ENCODE measurements at regions of chr19 and their contacts with region 1.

Region 1: DNA sequence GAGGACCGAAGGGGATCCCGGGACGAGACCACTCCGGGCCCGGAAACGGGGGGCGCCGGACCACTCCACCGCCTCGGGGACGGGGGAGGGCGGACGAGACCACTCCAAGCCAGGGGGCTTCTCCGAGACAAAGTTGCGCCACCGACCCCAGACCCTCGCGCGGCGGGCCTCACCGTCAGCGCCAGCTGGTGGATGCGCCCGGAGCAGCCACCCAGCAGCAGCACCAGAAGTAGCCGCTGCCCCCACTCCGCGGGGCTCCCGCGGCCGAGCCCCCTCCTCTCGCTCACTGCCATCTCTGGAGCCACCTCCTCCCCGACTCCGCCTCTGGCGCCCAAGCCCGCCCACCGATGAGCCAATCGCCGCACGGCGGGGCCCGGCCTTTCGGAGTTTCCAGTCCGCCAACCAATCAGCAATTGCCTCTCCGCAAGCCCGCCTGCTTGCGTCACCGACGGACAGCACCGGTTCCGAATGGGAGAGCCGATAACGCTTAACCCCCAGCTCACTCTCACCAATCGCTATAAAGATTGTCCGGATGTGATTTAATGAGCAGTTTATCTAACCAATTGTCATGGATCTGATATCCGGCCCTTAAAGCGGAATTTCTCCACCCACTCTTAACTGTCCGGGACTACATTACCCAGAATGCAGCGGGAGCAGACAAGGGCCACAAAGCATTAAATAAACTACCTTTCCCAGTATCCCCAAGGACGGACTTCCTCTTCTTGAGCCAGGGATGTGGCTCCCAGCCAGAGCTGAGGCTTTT is at the start of gene GPR108:
- DNase-seq: peak; percentile 100
- ATAC-seq: peak; percentile 81
- H3K4me3 Mint-ChIP-seq: peak within 1 kb of the TSS; percentile 89
- H3K27ac Mint-ChIP-seq: peak within 1 kb of the TSS; percentile 98
- H3K4me1 Mint-ChIP-seq: peaks cover 39% of the 10 kb centered on the region
- H3K27me3 Mint-ChIP-seq: no peaks in the 10 kb centered on the region
- total RNA-seq, gene GPR108: 58.8 to 59.9 TPM

Region 2: DNA sequence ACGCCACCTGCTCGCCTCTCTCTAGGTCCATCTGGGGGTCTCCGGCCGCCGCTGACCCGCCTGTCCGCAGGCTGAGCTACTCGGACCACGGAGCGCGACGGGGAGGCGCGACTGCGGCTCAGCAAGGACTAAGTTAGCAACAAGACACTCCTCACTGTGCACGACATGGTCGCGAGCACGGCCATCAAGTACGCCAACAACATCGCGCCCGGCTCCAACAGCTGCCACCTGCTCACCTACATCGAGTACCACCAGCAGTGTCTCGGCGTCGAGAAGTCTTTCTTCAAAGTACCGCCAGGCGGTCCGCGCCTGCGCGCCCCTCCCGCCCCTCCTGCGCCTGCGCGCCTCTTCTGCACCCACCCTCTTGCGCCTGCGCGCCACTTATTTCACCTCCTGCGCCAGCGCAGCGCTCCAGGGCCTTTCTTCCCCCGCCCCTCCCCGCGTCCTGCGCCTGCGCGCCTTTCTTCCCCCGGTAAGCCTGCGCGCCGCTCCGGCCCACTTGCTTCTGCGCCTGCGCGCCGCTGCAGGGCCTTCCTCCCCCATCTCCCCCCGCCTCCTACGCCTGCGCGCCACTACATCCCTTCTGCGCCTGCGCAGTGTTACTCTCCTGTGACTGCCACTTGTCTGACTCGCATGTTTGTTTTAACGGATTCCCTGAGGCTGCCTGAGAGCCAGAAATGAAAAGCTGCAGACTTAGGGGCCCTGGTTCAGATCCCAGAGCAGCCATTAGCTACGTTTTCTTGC is 538.1 kb before region 1 on chr19:
- CTCF ChIA-PET with region 1: no interaction called
- POLR2A ChIA-PET with region 1: no interaction called
- intact Hi-C with region 1: loop called in 1 of 2 experiments (anchors 1 kb)
- DNase-seq: peak; percentile 100
- ATAC-seq: peak; percentile 95
- H3K4me3 Mint-ChIP-seq: peak overlapping the region; percentile 100
- H3K27ac Mint-ChIP-seq: peak overlapping the region; percentile 92
- H3K4me1 Mint-ChIP-seq: peaks cover 12% of the 10 kb centered on the region
- H3K27me3 Mint-ChIP-seq: no peaks in the 10 kb centered on the region

Region 3: DNA sequence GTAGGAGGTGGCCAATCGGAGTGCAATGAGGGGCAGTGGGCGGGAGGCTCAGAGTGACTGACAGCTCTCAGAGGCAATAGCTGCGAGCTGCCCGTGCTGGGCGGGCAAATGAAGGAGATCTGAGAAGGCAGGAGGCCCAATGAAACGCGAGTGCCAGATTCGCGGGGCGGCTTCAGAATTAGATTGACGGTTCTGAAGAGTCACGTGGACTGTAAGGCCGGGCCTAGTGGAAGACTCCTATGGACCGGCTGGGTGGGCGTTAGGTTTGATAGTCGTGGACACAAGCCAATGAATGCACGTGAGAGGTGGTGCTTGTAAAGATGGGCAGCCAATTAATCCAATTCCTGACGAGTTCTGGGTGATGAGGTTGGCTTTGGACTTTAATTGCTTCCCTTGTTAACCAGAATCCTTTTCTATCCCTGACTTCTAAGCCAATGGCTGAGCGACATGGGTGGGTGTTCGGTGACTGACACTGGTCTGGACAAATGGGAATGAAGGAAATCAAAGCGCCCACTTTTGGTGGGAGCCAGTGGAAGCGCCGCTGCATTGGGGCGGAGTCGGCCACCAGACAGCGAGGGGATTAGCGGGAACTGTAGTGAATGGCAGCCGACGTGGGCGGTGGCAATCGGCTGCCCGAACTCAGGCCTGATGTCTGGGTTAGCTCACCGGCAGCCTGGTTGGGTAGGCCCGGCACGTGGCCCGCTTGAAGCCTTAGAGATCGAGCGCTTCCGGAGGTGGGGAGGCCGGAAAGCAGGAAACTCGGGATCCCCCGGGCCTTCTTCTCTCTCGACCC is 312.3 kb before region 1 on chr19:
- CTCF ChIA-PET with region 1: no interaction called
- POLR2A ChIA-PET with region 1: no interaction called
- intact Hi-C with region 1: loop called in 1 of 2 experiments (anchors 1 kb)
- DNase-seq: peak; percentile 100
- ATAC-seq: peak; percentile 88
- H3K4me3 Mint-ChIP-seq: peak overlapping the region; percentile 73
- H3K27ac Mint-ChIP-seq: peak overlapping the region; percentile 98
- H3K4me1 Mint-ChIP-seq: peaks cover 31% of the 10 kb centered on the region
- H3K27me3 Mint-ChIP-seq: no peaks in the 10 kb centered on the region

Region 4: GRCh38 chr19:6610934-6611852 is 126.3 kb before region 1 on chr19:
- CTCF ChIA-PET with region 1: no interaction called
- POLR2A ChIA-PET with region 1: no interaction called
- intact Hi-C with region 1: no loop called
- DNase-seq: no peak
- ATAC-seq: peak; percentile 27
- H3K4me3 Mint-ChIP-seq: no peak overlapping the region
- H3K27ac Mint-ChIP-seq: no peak overlapping the region
- H3K4me1 Mint-ChIP-seq: peaks cover 25% of the 10 kb centered on the region
- H3K27me3 Mint-ChIP-seq: peaks cover 27% of the 10 kb centered on the region

Region 5: GRCh38 chr19:6632002-6632621 is 105.4 kb before region 1 on chr19:
- CTCF ChIA-PET with region 1: interaction called, 4 read pairs
- POLR2A ChIA-PET with region 1: no interaction called
- intact Hi-C with region 1: loop called (anchors 1 kb)
- DNase-seq: peak; percentile 87
- ATAC-seq: peak; percentile 87
- H3K4me3 Mint-ChIP-seq: no peak overlapping the region
- H3K27ac Mint-ChIP-seq: no peak overlapping the region
- H3K4me1 Mint-ChIP-seq: peaks cover 28% of the 10 kb centered on the region
- H3K27me3 Mint-ChIP-seq: peaks cover 6% of the 10 kb centered on the region

Region 6: GRCh38 chr19:6710273-6711077 is 27.0 kb before region 1 on chr19:
- CTCF ChIA-PET with region 1: no interaction called
- POLR2A ChIA-PET with region 1: no interaction called
- intact Hi-C with region 1: no loop called
- DNase-seq: peak; percentile 35
- ATAC-seq: peak; percentile 23
- H3K4me3 Mint-ChIP-seq: no peak overlapping the region
- H3K27ac Mint-ChIP-seq: no peak overlapping the region
- H3K4me1 Mint-ChIP-seq: peaks cover 10% of the 10 kb centered on the region
- H3K27me3 Mint-ChIP-seq: peaks cover 29% of the 10 kb centered on the region

Region 7: DNA sequence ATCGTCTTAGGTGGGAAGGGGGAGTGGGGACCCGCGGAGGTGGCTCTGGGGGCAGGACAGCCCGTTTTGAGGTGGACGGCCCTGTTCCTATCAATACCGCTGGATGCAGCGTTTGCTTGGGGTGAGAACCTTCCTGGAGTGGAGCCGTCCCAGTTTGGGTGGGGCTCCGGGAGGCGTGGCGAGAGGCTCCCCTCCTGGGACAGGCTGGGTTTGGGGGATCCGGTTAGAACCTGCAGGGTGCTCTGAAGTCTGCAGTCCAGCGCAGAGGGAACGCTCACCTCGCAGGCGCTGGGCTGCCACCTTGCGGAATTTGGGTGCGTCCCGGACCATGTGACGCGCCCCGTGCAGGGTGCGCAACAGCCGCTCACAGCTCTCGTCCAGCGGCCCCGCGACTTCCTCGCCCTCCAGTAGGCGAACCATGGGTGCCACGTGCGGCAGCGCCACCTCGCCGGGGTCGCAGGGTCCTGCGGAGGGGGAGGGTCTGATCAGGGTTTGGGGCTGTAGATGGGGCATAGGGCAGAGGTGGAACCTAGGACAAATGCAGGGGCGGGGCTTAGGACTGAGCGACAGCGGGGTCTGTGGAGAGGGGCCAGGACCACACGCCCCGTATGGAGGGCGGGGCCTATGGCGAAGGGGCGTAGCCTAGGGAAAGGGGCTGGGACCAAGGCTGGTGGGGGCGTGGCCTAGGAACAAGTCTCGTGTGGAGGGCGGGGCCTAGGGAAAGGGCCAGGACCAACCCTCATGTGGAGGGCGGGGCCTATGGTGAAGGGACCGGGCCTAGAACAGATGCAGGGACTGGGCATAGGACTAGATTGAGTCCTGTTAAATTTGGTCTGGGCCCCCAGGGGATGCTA is 15.9 kb after region 1 on chr19:
- CTCF ChIA-PET with region 1: interaction called, 3 read pairs
- POLR2A ChIA-PET with region 1: interaction called, 3 read pairs
- intact Hi-C with region 1: loop called (anchors 1 to 2 kb)
- DNase-seq: peak; percentile 93
- ATAC-seq: peak; percentile 94
- H3K4me3 Mint-ChIP-seq: peak overlapping the region; percentile 59
- H3K27ac Mint-ChIP-seq: peak overlapping the region; percentile 47
- H3K4me1 Mint-ChIP-seq: peaks cover 13% of the 10 kb centered on the region
- H3K27me3 Mint-ChIP-seq: no peaks in the 10 kb centered on the region

Region 8: DNA sequence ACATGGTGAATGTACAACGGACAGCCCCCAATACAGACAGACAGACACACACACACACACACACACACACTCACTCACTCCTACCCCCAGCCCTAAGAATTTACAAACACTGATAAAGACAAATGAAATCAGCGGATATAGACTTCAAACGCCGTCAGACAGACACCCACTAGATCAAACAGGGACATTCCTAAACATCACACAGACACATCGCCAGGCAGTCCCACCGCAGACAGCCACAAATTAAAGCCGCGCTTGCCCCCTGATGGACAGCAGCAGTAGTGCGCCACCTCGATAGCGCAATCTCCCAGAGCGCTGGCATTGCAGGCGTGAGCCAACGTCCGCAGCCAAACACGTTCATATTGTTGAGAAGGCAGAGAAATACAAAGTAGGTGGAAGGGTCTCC is 125.2 kb after region 1 on chr19:
- CTCF ChIA-PET with region 1: interaction called, 38 read pairs
- POLR2A ChIA-PET with region 1: interaction called, 7 read pairs
- intact Hi-C with region 1: loop called (anchors 1 kb)
- DNase-seq: peak; percentile 96
- ATAC-seq: peak; percentile 83
- H3K4me3 Mint-ChIP-seq: peak overlapping the region; percentile 72
- H3K27ac Mint-ChIP-seq: peak overlapping the region; percentile 89
- H3K4me1 Mint-ChIP-seq: peaks cover 14% of the 10 kb centered on the region
- H3K27me3 Mint-ChIP-seq: no peaks in the 10 kb centered on the region

Region 9: DNA sequence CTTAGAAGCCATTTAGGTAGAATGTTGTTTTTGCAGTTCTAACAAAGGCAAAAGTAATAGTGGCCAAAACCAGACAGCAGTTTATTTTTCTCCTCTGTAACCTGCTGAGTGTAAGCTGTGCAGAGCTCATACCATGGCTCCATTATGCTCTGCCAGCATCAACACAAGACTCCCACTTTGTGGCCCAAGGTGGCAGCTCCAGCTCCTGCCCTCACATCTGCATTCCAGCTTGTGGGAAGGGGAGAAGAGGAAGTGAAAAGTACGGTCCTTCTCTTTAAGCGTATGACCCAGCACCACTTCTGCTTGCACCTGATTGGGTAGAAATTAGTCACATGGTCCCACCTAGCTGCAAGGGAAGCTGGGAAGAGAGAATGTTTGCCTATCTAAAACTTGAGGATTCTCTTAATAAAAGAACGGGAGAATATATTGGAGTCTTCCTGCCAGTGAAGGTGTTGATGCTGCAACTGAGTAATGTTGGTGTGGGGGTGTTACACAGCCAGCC is 169.1 kb after region 1 on chr19:
- CTCF ChIA-PET with region 1: no interaction called
- POLR2A ChIA-PET with region 1: no interaction called
- intact Hi-C with region 1: no loop called
- DNase-seq: no peak
- ATAC-seq: no peak
- H3K4me3 Mint-ChIP-seq: no peak overlapping the region
- H3K27ac Mint-ChIP-seq: no peak overlapping the region
- H3K4me1 Mint-ChIP-seq: no peaks in the 10 kb centered on the region
- H3K27me3 Mint-ChIP-seq: no peaks in the 10 kb centered on the region

Region 10: DNA sequence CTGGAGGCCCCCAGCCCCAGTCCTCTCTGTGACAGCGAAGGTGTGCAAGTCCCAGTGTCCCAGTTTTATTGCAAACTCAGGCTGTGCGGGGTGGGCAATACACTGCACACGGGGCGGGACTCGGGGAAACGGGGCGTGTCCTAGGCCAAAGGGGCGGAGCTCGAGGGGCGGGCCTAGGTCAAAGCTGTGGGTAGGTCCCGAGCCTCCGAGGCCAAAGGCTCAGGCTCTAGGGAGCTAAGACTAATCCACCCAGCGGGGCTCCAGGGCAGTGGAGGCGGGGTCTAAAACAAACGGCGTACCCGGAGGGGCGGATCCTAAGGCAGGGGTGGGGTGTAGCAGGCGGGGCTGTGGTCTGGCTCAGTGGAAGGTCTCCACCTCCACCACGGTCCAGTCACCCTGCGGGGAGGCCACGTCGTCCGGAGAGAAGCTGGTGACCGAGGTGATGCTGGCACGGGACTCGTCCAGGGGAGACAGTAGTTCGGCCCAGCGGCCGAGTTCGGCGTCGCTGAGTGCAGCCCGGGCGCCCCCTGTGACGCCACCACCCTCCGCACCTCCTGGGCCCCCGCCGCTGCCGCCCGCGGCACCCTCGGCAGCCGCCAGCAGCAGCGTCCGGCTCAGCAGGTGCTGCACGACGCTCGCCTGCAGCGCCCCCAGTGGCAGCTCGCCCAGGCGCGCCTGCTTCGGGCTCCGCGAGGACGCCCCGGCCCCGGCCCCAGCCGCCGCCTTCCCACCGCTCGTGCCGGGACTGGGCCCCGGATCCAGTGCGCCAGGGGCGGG is 1131.4 kb after region 1 on chr19:
- CTCF ChIA-PET with region 1: no interaction called
- POLR2A ChIA-PET with region 1: no interaction called
- intact Hi-C with region 1: loop called in 1 of 2 experiments (anchors 5 kb)
- DNase-seq: peak; percentile 92
- ATAC-seq: peak; percentile 75
- H3K4me3 Mint-ChIP-seq: peak overlapping the region; percentile 70
- H3K27ac Mint-ChIP-seq: peak overlapping the region; percentile 51
- H3K4me1 Mint-ChIP-seq: peaks cover 47% of the 10 kb centered on the region
- H3K27me3 Mint-ChIP-seq: peaks cover 29% of the 10 kb centered on the region

Measured in activated CD4-positive, alpha-beta T cell treated with anti-CD3 and anti-CD28 coated beads for 36 hours (primary cell).